ENCODE measurements at regions of chr22 and their contacts with region 1.

Region 1: DNA sequence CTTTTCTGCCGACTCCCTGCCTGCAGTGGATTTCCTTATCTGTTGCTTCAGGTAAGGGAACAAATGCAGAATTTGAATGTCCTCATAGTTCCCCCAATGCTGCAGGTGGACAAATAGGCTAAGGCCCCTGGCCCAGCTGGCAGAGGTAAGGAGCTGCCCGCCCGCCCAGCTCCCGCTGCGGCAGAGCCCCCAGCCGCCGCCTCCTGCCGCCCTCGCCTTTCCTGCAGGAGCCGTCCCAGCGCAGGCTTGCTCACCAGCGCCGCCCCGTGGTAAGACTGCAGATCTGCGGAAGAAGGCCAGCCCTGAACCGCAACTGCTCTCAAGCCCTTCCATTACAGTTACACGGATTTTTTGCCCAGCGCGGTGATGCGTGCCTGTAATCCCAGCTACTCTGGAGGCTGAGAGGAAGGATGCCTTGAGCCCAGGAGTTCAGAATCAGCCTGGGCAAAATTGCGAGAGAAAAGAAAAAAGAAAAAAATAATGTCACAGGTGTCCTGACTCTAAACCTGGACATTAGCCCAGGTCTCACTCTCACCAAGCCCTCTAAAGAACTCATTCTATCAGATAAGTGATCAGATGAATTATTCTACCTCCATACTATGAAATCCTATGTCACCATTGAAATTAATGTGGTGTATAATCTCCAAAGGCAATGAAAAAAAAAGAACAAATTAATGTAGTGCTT is 51.2 kb upstream of the EMID1 start:
- DNase-seq: peak; percentile 84
- H3K4me3 Mint-ChIP-seq: no peak overlapping the region
- H3K27ac Mint-ChIP-seq: no peak overlapping the region
- H3K4me1 Mint-ChIP-seq: peaks cover 6% of the 10 kb centered on the region
- H3K27me3 Mint-ChIP-seq: peaks cover 34% of the 10 kb centered on the region

Region 2: DNA sequence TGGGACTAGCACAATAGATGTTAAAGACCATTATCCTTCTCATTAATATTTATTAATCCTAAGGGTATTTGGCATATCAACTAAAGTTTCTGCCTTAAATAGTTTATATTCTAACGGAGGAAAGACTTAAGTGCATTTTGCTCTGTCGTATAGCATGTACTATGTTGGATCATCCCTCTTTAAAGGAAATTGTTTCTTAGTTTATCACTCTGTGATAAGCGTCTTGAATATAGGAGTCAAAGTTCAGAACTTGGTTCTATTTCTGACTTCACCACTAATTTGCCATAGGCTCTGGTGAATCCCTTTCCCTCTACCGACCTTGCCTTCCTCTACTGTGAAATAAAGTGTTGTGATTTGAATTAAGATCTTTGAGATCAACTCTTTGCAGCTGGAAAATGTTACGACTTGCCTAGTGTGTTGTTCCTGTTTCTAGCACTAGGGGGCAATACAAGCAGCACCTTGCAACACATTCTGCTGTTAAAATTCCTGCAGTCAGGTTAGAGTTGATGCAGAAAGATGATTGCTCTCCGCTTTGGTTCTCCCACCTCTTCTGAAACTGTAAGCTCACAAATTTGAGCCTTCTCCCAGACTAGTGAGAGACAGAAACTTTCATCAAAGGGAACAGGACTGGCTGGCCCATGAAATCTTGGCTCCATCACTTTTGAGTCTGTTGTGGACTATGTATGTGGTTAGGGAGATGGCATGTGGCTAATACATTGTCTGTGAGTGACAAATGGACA is 299.0 kb before region 1 on chr22:
- CTCF ChIA-PET with region 1: no interaction called
- intact Hi-C with region 1: loop called (anchors 1 kb)
- DNase-seq: peak; percentile 64
- H3K4me3 Mint-ChIP-seq: no peak overlapping the region
- H3K27ac Mint-ChIP-seq: no peak overlapping the region
- H3K4me1 Mint-ChIP-seq: no peaks in the 10 kb centered on the region
- H3K27me3 Mint-ChIP-seq: peaks cover 2% of the 10 kb centered on the region

Region 3: GRCh38 chr22:29072193-29072978 is 82.1 kb before region 1 on chr22:
- CTCF ChIA-PET with region 1: interaction called, 3 read pairs
- intact Hi-C with region 1: loop called (anchors 10 kb)
- DNase-seq: peak; percentile 87
- H3K4me3 Mint-ChIP-seq: peak overlapping the region; percentile 65
- H3K27ac Mint-ChIP-seq: no peak overlapping the region
- H3K4me1 Mint-ChIP-seq: peaks cover 20% of the 10 kb centered on the region
- H3K27me3 Mint-ChIP-seq: peaks cover 49% of the 10 kb centered on the region